Panc1 (cell line): ENCODE measurements at regions of chr11 and their contacts with region 1.

Region 1: GRCh38 chr11:117160826-117161225 is 16.7 kb downstream of the PAFAH1B2 start:
- DNase-seq: no peak
- ATAC-seq: no peak
- H3K4me3 ChIP-seq: no peak overlapping the region
- H3K27ac ChIP-seq: no peak overlapping the region
- H3K4me1 ChIP-seq: no peaks in the 10 kb centered on the region
- H3K27me3 ChIP-seq: no peaks in the 10 kb centered on the region
- CTCF ChIP-seq: no peak

Region 2: DNA sequence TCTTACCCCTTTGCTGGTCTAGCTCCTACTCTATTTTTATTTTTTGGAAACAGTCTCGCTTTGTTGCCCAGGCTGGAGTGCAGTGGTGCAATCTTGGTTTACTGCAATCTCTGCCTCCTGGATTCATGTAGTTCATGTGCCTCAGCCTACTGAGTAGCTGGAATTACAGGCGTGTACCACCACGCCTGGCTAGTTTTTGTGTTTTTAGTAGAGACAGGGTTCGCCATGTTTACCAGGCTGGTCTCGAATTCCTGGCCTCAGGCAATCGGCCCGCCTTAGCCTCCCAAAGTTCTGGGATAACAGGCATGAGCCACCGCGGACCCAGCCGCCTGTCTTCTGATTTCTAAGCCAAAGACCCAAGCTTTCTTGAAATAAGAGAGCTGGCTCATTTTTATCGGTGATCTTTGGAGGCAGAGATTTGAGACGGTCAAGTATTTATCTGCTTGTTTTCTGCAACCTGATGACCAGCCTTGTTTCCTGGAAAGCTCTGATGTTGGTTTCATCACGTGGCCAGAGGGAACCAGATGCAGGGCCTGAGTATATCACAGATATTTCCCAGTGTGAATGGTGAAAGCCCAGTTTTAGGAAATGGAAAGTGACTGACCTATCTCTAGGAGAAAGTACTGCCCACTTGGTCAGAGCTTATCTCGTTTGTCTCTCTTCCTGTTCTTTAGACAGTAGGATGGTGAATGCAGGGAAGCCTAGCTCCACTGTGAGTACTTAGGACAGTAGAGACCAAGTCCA is 12.0 kb after region 1 on chr11:
- CTCF ChIA-PET with region 1: no interaction called
- POLR2A ChIA-PET with region 1: interaction called, 12 read pairs
- in situ Hi-C with region 1: no loop called
- intact Hi-C with region 1: no loop called
- DNase-seq: no peak
- ATAC-seq: no peak
- H3K4me3 ChIP-seq: no peak overlapping the region
- H3K27ac ChIP-seq: no peak overlapping the region
- H3K4me1 ChIP-seq: peaks cover 6% of the 10 kb centered on the region
- H3K27me3 ChIP-seq: no peaks in the 10 kb centered on the region
- CTCF ChIP-seq: no peak

Region 3: GRCh38 chr11:117327567-117328374 is 166.9 kb after region 1 on chr11 and contains the start of gene CEP164:
- CTCF ChIA-PET with region 1: no interaction called
- POLR2A ChIA-PET with region 1: no interaction called
- in situ Hi-C with region 1: no loop called
- intact Hi-C with region 1: no loop called
- DNase-seq: peak; percentile 91
- ATAC-seq: peak; percentile 98
- H3K4me3 ChIP-seq: peak within 1 kb of the TSS; percentile 71 to 96
- H3K27ac ChIP-seq: peak within 1 kb of the TSS; percentile 90
- H3K4me1 ChIP-seq: peaks cover 9% of the 10 kb centered on the region
- H3K27me3 ChIP-seq: no peaks in the 10 kb centered on the region
- CTCF ChIP-seq: no peak
- total RNA-seq, gene CEP164: 75.4 TPM